Activated CD8-positive, alpha-beta T cell treated with anti-CD3 and anti-CD28 coated beads, Interleukin-2, amount 10 ng/mL, durations not matched to agents 7 days and 5 days (primary cell): ENCODE measurements at regions of chr1 and their contacts with region 1.

Region 1: DNA sequence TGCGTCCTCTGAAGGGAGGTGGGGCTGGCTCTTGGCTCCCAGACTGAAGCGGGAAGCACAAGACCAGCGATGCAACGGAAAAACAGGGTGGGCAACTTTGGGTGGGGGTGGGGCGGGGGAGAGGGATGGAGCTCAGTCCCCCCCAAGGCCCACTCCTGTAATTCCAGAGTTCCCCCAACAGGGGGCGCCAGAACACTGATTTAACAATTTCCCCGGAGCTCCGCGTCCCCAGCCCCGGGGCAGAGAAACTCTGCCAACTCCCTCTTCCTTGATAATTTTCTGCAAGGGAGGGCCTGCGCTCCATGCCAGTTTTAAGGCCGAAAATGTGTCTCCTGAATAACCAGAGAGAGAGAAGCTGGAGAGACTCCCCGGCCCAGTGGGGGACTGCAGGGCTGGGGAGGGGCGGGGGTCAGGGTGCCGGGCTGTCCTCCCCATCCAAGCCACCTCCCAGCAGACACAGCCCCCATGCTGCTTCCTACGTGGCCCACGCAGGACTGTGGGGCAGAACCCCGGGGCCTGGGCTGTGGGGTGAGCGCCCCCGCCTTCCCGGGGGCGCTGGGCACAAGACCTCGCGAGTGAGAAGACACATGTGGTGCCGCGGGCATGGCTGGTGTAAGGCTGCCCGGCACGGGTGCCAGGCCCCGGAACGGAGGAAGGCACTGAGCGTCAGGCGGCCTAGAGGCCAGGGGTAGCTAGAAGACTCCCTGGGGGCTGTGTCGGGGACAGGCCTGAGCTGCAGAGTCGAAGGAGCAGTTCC is 51.4 kb downstream of the KIF21B start:
- DNase-seq: peak; percentile 66
- ATAC-seq: no peak
- H3K4me3 Mint-ChIP-seq: no peak overlapping the region
- H3K27ac Mint-ChIP-seq: no peak overlapping the region
- H3K4me1 Mint-ChIP-seq: peaks cover 10% of the 10 kb centered on the region
- H3K27me3 Mint-ChIP-seq: no peaks in the 10 kb centered on the region

Region 2: GRCh38 chr1:200620273-200621131 is 351.6 kb before region 1 on chr1 and contains the start of gene KIF14:
- CTCF ChIA-PET with region 1: interaction called, 14 read pairs
- POLR2A ChIA-PET with region 1: no interaction called
- DNase-seq: peak; percentile 98
- ATAC-seq: peak; percentile 98
- H3K4me3 Mint-ChIP-seq: peak within 1 kb of the TSS; percentile 92
- H3K27ac Mint-ChIP-seq: peak within 1 kb of the TSS; percentile 92
- H3K4me1 Mint-ChIP-seq: peaks cover 57% of the 10 kb centered on the region
- H3K27me3 Mint-ChIP-seq: no peaks in the 10 kb centered on the region
- total RNA-seq, gene KIF14: 34.1 to 35.8 TPM

Region 3: GRCh38 chr1:200837931-200838571 is 134.1 kb before region 1 on chr1:
- CTCF ChIA-PET with region 1: no interaction called
- POLR2A ChIA-PET with region 1: no interaction called
- DNase-seq: no peak
- ATAC-seq: no peak
- H3K4me3 Mint-ChIP-seq: no peak overlapping the region
- H3K27ac Mint-ChIP-seq: no peak overlapping the region
- H3K4me1 Mint-ChIP-seq: no peaks in the 10 kb centered on the region
- H3K27me3 Mint-ChIP-seq: peaks cover 2% of the 10 kb centered on the region

Region 4: DNA sequence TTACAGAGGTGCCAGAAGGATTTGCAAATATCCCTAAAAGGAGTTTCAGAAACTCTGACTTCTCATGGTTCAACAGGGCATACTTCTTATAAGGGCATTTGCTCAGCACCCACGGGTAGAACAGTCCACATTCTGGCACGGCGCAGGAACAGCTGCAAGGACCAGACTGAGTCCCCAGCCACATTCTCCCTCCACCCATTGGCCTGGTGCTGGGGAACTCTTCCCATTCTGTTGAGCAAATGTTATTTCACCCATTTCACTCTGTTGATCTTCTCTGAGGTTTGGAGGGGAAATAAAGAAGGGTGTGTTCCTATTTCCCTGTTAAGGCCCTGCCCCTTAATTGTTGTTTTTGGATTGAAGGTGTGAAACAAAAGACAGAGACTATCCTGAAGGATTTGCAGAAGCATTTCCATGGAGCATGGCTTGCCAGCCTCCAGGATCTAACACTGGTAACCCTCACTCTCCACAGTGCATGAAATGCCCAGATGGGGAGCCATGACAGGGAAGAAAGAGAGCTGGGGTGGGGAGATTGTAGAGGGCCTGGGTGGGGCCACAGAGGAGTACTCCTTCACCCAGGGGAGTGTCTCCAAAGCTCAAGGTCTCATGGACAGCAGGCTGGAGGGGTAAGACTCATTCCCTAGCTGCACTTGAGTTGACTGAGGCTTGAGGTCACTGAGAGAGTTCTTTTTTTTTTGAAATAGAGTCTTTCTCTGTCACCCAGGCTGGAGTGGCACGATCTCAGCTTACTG is 42.4 kb before region 1 on chr1:
- CTCF ChIA-PET with region 1: no interaction called
- POLR2A ChIA-PET with region 1: no interaction called
- DNase-seq: no peak
- ATAC-seq: no peak
- H3K4me3 Mint-ChIP-seq: no peak overlapping the region
- H3K27ac Mint-ChIP-seq: no peak overlapping the region
- H3K4me1 Mint-ChIP-seq: peaks cover 9% of the 10 kb centered on the region
- H3K27me3 Mint-ChIP-seq: peaks cover 15% of the 10 kb centered on the region

Region 5: GRCh38 chr1:200990114-200990513 is 18.0 kb after region 1 on chr1:
- CTCF ChIA-PET with region 1: interaction called, 10 read pairs
- POLR2A ChIA-PET with region 1: interaction called, 4 read pairs
- DNase-seq: no peak
- ATAC-seq: no peak
- H3K4me3 Mint-ChIP-seq: no peak overlapping the region
- H3K27ac Mint-ChIP-seq: no peak overlapping the region
- H3K4me1 Mint-ChIP-seq: no peaks in the 10 kb centered on the region
- H3K27me3 Mint-ChIP-seq: no peaks in the 10 kb centered on the region

Region 6: GRCh38 chr1:201023517-201023902 is 51.4 kb after region 1 on chr1 and contains the start of gene KIF21B:
- CTCF ChIA-PET with region 1: interaction called, 130 read pairs
- POLR2A ChIA-PET with region 1: interaction called, 9 read pairs
- DNase-seq: peak; percentile 94
- ATAC-seq: peak; percentile 77
- H3K4me3 Mint-ChIP-seq: peak within 1 kb of the TSS; percentile 93
- H3K27ac Mint-ChIP-seq: peak within 1 kb of the TSS; percentile 100
- H3K4me1 Mint-ChIP-seq: peaks cover 62% of the 10 kb centered on the region
- H3K27me3 Mint-ChIP-seq: no peaks in the 10 kb centered on the region
- total RNA-seq, gene KIF21B: 158 to 162 TPM

Region 7: GRCh38 chr1:201050515-201051277 is 78.6 kb after region 1 on chr1:
- CTCF ChIA-PET with region 1: interaction called, 19 read pairs
- POLR2A ChIA-PET with region 1: no interaction called
- DNase-seq: no peak
- ATAC-seq: no peak
- H3K4me3 Mint-ChIP-seq: no peak overlapping the region
- H3K27ac Mint-ChIP-seq: no peak overlapping the region
- H3K4me1 Mint-ChIP-seq: no peaks in the 10 kb centered on the region
- H3K27me3 Mint-ChIP-seq: peaks cover 8% of the 10 kb centered on the region

Region 8: DNA sequence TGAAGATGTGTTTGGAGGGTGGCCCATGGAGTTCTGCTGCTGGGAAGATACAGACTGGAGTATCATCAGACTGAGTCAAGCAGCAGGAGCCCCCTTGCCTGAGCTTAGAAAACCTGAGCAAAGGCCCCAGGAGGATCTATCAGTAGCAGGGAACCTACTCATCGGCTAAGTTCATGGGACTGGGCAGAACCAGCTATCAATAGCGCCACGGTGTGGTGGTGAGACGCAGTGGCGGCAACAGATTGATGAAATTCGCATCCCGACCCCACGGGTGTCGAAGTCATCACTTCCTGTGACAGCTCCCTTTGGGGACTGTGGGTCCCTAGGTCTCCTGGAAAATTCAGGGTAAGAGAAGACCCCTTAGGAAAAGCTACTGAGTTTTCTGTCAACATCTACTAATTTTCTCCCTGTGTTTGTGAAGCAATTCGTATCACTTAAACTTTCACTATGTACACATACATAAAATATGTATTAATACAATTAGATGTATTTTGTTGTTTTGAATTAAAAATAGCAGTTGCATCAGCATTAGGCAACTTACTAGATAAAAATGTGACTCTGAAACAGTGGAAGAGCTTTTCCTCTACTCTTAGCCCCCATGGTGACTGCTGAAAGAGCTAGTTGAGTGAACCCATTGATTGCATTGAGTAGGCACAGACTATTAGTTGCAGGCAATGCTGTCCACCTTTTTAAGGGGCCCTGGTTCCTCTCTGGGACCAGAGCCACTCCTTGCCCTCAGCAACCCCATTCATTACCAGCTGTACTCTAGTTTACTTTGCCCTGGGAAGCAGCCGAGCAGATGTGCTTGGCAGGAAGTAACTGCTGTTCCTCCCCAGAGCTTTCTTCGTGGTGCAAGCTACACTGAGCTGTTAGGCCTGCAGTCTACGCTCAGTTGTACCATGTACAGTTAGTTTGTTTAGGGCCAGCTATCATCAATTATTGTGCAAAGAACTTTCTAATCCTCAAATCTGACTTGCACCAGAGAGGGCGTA is 147.4 kb after region 1 on chr1:
- CTCF ChIA-PET with region 1: interaction called, 30 read pairs
- POLR2A ChIA-PET with region 1: no interaction called
- DNase-seq: peak; percentile 66
- ATAC-seq: no peak
- H3K4me3 Mint-ChIP-seq: no peak overlapping the region
- H3K27ac Mint-ChIP-seq: no peak overlapping the region
- H3K4me1 Mint-ChIP-seq: peaks cover 7% of the 10 kb centered on the region
- H3K27me3 Mint-ChIP-seq: peaks cover 15% of the 10 kb centered on the region